Thyroid gland (tissue), 4 donors: ENCODE measurements at regions of chr1 and their contacts with region 1.

Region 1: DNA sequence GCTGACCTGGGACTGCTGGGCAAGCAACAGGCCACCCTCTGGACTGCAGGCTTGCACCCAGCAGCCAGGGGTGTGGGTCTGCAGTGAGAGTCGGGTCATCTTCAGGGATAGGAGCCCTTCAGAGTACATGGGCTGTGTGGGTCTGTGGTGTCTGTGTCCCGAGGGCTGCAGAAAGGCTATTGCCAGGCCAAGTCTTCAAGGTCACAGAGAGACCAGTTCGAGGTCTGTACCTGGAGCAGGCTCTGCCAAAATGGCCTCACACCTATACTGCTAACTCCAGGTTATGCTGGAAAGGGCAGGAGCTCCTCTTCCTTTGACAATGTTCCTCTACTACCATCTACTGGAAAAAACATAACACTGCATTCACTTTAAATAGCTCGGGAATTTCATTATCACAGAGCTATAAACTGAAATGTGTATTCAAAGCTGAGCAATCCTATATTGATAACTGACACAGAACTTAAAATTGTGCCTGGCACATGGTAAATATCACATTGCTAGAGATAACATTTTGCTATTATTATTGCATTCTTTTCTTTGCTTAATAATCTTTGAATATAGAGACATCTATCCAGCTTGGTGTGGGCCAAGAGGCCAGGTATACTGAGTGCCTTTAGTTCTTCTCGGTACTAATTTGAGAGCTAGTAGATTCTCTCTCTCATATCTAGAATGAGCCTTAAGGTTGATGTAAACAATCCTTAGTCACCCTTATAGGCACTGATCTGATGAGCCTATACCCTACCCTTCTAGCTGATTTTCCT is 6.9 kb upstream of the DNAH14 start:
- DNase-seq: no peak
- H3K4me3 ChIP-seq: no peak overlapping the region
- H3K27ac ChIP-seq: no peak overlapping the region
- H3K4me1 ChIP-seq: no peaks in the 10 kb centered on the region
- H3K27me3 ChIP-seq: no peaks in the 10 kb centered on the region
- CTCF ChIP-seq: peak; percentile 23 to 82 (median 61)
- POLR2A ChIP-seq: no peak

Region 2: DNA sequence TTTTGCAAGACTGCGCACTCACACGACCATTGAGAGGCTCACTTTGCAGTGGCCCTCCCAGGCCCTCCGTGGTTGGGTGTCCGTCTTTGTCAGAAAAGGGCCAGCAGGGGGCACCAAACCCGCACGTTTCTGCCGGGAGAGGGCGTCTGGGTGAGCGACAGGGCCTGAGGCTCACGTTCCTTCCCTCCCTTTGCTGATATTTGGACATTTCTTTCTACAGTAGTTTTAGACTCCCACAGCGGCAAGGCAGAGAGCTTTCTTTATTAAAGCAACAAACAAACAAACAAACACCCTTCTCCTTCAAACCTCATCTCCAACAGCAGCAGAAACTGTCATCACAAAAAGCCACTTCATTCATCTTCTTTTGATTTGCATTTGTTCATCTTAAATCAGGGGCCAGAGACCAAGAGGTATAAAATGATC is 408.8 kb before region 1 on chr1:
- intact Hi-C with region 1: loop called (anchors 10 kb)
- DNase-seq: peak; percentile 82 to 92
- H3K4me3 ChIP-seq: no peak overlapping the region
- H3K27ac ChIP-seq: no peak overlapping the region
- H3K4me1 ChIP-seq: peaks cover 0 to 3% of the 10 kb centered on the region in 2 donors
- H3K27me3 ChIP-seq: no peaks in the 10 kb centered on the region
- CTCF ChIP-seq: peak; percentile 54 to 92 (median 92)
- POLR2A ChIP-seq: no peak

Region 3: DNA sequence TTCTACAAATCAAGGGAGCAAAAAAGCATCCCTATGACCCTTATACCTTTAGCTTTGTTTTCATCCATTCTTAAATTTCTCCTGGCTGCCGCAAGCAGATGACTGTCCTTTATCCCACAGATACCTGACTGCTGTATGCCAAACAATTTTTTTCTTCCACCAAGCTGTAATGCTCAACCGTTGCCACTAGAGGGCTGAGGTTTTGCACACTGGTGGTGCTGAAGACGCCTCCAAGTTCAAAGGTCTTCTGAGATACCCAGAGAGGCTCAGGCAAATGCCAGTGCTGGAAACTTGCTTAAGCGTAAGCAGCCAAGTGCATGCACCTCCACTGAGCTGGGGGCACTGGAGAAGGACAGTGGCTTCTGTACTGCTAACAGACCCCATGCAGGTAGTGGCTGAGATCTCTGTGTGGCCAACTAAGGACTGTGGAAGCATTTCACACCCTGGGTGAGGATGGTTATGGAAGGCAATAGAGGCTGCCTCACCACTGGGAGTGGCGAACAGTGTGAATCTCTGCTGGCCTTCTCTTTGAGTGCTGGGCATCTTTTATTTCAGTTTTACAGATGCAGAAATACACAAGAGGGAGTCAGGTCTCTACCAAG is 277.9 kb before region 1 on chr1:
- intact Hi-C with region 1: loop called (anchors 10 kb)
- DNase-seq: peak; percentile 26 to 39
- H3K4me3 ChIP-seq: no peak overlapping the region
- H3K27ac ChIP-seq: no peak overlapping the region
- H3K4me1 ChIP-seq: no peaks in the 10 kb centered on the region
- H3K27me3 ChIP-seq: no peaks in the 10 kb centered on the region
- CTCF ChIP-seq: peak; percentile 52 to 85 (median 76)
- POLR2A ChIP-seq: no peak